ENCODE measurements at regions of chr12 and their contacts with region 1.

Region 1: GRCh38 chr12:32455607-32456071 is 56.3 kb downstream of the FGD4 start:
- DNase-seq: peak; percentile 91
- H3K4me3 ChIP-seq: peak overlapping the region in 2 of 3 experiments; percentile 50 to 82
- H3K27ac ChIP-seq: peak overlapping the region; percentile 89
- H3K4me1 ChIP-seq: peaks cover 67% of the 10 kb centered on the region
- H3K27me3 ChIP-seq: no peaks in the 10 kb centered on the region
- CTCF ChIP-seq: peak; percentile 44 to 46
- POLR2A ChIP-seq: peak; percentile 35

Region 2: GRCh38 chr12:31659087-31659933 is 796.3 kb before region 1 on chr12 and contains the start of gene ETFBKMT:
- CTCF ChIA-PET with region 1: no interaction called
- POLR2A ChIA-PET with region 1: no interaction called
- dilution Hi-C with region 1: no loop called
- intact Hi-C with region 1: loop called (anchors 10 kb)
- DNase-seq: peak; percentile 89
- H3K4me3 ChIP-seq: peak within 1 kb of the TSS; percentile 75 to 87 (median 81)
- H3K27ac ChIP-seq: peak within 1 kb of the TSS; percentile 87
- H3K4me1 ChIP-seq: peaks cover 4% of the 10 kb centered on the region
- H3K27me3 ChIP-seq: no peaks in the 10 kb centered on the region
- CTCF ChIP-seq: peak; percentile 30 to 38
- POLR2A ChIP-seq: peak; percentile 86
- total RNA-seq, gene ETFBKMT: 2.4 and 3.1 TPM in 2 replicates

Region 3: GRCh38 chr12:32290411-32290810 is 165.2 kb before region 1 on chr12:
- CTCF ChIA-PET with region 1: no interaction called
- POLR2A ChIA-PET with region 1: no interaction called
- dilution Hi-C with region 1: no loop called
- intact Hi-C with region 1: no loop called
- DNase-seq: no peak
- H3K4me3 ChIP-seq: no peak overlapping the region
- H3K27ac ChIP-seq: no peak overlapping the region
- H3K4me1 ChIP-seq: no peaks in the 10 kb centered on the region
- H3K27me3 ChIP-seq: no peaks in the 10 kb centered on the region
- CTCF ChIP-seq: no peak
- POLR2A ChIP-seq: no peak

Region 4: DNA sequence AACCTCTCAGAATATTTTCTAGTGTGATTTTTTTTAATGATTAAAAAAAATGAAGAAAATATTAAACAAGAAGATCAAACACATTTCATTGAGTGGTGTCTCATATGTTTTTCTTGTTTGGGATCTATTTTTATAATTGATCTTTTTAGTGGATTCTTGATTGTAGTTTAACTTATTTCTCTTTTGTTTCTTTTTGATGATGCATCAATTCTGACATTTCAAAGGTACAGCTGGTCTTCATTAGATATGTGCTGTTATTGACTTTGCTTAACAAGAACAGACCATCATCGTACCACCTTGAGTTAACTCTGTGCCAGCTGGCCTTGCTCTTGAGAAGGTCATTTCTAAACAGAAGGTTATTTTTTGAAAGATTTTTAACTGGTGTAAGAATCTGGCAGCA is 102.1 kb before region 1 on chr12:
- CTCF ChIA-PET with region 1: no interaction called
- POLR2A ChIA-PET with region 1: no interaction called
- dilution Hi-C with region 1: no loop called
- intact Hi-C with region 1: no loop called
- DNase-seq: no peak
- H3K4me3 ChIP-seq: no peak overlapping the region
- H3K27ac ChIP-seq: no peak overlapping the region
- H3K4me1 ChIP-seq: no peaks in the 10 kb centered on the region
- H3K27me3 ChIP-seq: no peaks in the 10 kb centered on the region
- CTCF ChIP-seq: no peak
- POLR2A ChIP-seq: no peak

Region 5: GRCh38 chr12:32423559-32423958 is 32.1 kb before region 1 on chr12:
- CTCF ChIA-PET with region 1: interaction called, 5 read pairs
- POLR2A ChIA-PET with region 1: no interaction called
- dilution Hi-C with region 1: no loop called
- intact Hi-C with region 1: loop called (anchors 2 kb)
- DNase-seq: no peak
- H3K4me3 ChIP-seq: no peak overlapping the region
- H3K27ac ChIP-seq: no peak overlapping the region
- H3K4me1 ChIP-seq: peaks cover 8% of the 10 kb centered on the region
- H3K27me3 ChIP-seq: no peaks in the 10 kb centered on the region
- CTCF ChIP-seq: no peak
- POLR2A ChIP-seq: no peak

Region 6: GRCh38 chr12:32482226-32482625 is 26.6 kb after region 1 on chr12:
- CTCF ChIA-PET with region 1: interaction called, 18 read pairs
- POLR2A ChIA-PET with region 1: no interaction called
- dilution Hi-C with region 1: no loop called
- intact Hi-C with region 1: loop called (anchors 1 kb)
- DNase-seq: peak; percentile 71
- H3K4me3 ChIP-seq: no peak overlapping the region
- H3K27ac ChIP-seq: peak overlapping the region; percentile 47
- H3K4me1 ChIP-seq: peaks cover 53% of the 10 kb centered on the region
- H3K27me3 ChIP-seq: no peaks in the 10 kb centered on the region
- CTCF ChIP-seq: no peak
- POLR2A ChIP-seq: no peak

Region 7: GRCh38 chr12:32568241-32568640 is 112.6 kb after region 1 on chr12:
- CTCF ChIA-PET with region 1: interaction called, 12 read pairs
- POLR2A ChIA-PET with region 1: no interaction called
- dilution Hi-C with region 1: no loop called
- intact Hi-C with region 1: no loop called
- DNase-seq: peak; percentile 87
- H3K4me3 ChIP-seq: peak overlapping the region in 1 of 3 experiments; percentile 5
- H3K27ac ChIP-seq: peak overlapping the region; percentile 79
- H3K4me1 ChIP-seq: peaks cover 20% of the 10 kb centered on the region
- H3K27me3 ChIP-seq: no peaks in the 10 kb centered on the region
- CTCF ChIP-seq: no peak
- POLR2A ChIP-seq: no peak

Region 8: GRCh38 chr12:32659908-32660440 is 204.3 kb after region 1 on chr12:
- CTCF ChIA-PET with region 1: interaction called, 33 read pairs
- POLR2A ChIA-PET with region 1: no interaction called
- dilution Hi-C with region 1: no loop called
- intact Hi-C with region 1: loop called (anchors 1 kb)
- DNase-seq: peak; percentile 11
- H3K4me3 ChIP-seq: no peak overlapping the region
- H3K27ac ChIP-seq: no peak overlapping the region
- H3K4me1 ChIP-seq: no peaks in the 10 kb centered on the region
- H3K27me3 ChIP-seq: no peaks in the 10 kb centered on the region
- CTCF ChIP-seq: no peak
- POLR2A ChIP-seq: no peak

Region 9: DNA sequence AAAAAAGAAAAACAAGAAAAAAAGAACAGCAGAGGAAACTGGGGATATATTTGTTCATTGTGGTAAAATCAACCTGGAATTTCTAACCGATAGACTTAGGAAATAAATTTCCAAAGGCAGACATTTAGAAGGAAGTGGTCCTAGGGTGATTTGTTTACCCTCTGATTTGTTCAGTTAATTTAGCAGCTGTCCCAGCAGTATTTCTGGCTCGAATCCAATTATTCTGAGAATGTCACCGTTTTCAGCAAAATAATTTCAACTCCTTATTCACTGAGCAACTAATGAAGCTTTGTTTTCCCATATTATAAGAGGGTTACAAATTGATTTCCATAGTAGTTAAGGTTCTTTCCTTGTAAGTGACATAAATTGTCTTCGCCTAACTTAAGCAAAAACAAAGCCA is 1269.2 kb after region 1 on chr12:
- CTCF ChIA-PET with region 1: no interaction called
- POLR2A ChIA-PET with region 1: no interaction called
- dilution Hi-C with region 1: no loop called
- intact Hi-C with region 1: no loop called
- DNase-seq: no peak
- H3K4me3 ChIP-seq: no peak overlapping the region
- H3K27ac ChIP-seq: no peak overlapping the region
- H3K4me1 ChIP-seq: no peaks in the 10 kb centered on the region
- H3K27me3 ChIP-seq: no peaks in the 10 kb centered on the region
- CTCF ChIP-seq: no peak
- POLR2A ChIP-seq: no peak

Measured in endothelial cell of umbilical vein (primary cell).